Right ventricle myocardium inferior (tissue), 1 donor: ENCODE measurements at regions of chr1 and their contacts with region 1.

Region 1: GRCh38 chr1:248807067-248807737 is 18.5 kb downstream of the SH3BP5L start:
- DNase-seq: peak; percentile 85
- ATAC-seq: peak; percentile 76

Region 2: DNA sequence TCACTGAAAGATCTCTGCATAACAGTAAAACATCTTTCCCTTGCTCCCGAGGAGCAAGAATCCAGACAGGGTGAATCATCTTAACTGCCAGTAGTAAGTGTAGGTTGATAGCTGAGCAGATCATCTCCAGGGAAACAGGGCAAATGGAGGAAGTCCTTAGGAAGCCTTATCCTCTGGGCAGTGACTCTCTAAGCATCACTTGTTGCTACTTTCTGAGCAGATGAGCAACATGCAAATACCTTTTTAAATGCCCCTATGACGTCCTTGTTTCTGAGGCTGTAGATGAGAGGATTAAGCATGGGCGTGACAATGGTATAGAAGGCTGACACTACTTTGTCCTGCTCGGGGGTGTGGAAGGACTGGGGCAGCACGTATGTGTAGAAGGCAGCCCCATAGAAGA is 181.2 kb before region 1 on chr1:
- intact Hi-C with region 1: loop called (anchors 2 kb)
- DNase-seq: no peak
- ATAC-seq: no peak

Region 3: GRCh38 chr1:248703674-248704073 is 103.5 kb before region 1 on chr1:
- intact Hi-C with region 1: loop called (anchors 5 kb)
- DNase-seq: no peak
- ATAC-seq: no peak